A673 (cell line): ENCODE measurements at regions of chr3 and their contacts with region 1.

Region 1: DNA sequence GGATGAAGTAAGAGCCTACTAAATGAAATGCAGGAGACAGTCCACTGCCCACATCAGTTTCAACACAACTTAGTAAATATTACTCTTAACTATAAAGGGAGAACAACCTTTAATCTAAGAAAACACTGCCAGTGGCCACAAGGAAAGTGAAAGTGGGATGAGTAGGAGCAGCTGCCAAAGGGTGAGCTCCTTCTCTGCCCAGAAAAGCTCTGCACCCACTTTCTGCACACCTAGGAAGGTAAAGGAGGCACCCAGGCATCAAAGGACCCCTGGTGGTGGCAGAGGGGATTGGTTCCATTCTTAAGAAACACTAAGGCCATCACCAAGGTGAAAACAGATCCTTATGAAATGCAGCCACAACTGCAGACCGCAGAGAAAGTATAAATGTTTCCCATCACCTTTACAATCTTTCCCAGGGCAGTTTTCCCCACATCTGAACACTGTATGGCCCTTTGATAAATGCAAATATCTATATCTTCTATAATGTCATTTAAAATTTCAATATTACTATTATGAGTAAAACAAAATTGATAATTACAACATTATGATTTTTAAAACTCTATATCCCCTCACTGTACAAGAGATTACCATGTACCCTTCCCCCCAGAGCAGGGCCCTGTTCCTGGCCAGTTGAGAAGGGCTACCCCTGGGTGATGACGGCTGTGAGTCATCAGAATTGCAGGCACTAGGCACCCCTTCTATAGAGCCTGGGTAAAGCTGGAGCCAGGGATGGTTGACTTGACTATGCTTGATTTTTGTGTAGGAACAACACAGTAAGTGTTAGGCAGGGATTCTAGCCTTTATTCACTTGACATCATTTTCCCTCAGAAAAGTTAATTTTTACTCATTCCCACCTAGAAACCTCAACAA is 92.0 kb downstream of the SNRK start:
- DNase-seq: peak; percentile 23
- H3K4me3 ChIP-seq: no peak overlapping the region
- H3K27ac ChIP-seq: no peak overlapping the region
- H3K4me1 ChIP-seq: no peaks in the 10 kb centered on the region
- H3K27me3 ChIP-seq: no peaks in the 10 kb centered on the region
- CTCF ChIP-seq: peak; percentile 54

Region 2: DNA sequence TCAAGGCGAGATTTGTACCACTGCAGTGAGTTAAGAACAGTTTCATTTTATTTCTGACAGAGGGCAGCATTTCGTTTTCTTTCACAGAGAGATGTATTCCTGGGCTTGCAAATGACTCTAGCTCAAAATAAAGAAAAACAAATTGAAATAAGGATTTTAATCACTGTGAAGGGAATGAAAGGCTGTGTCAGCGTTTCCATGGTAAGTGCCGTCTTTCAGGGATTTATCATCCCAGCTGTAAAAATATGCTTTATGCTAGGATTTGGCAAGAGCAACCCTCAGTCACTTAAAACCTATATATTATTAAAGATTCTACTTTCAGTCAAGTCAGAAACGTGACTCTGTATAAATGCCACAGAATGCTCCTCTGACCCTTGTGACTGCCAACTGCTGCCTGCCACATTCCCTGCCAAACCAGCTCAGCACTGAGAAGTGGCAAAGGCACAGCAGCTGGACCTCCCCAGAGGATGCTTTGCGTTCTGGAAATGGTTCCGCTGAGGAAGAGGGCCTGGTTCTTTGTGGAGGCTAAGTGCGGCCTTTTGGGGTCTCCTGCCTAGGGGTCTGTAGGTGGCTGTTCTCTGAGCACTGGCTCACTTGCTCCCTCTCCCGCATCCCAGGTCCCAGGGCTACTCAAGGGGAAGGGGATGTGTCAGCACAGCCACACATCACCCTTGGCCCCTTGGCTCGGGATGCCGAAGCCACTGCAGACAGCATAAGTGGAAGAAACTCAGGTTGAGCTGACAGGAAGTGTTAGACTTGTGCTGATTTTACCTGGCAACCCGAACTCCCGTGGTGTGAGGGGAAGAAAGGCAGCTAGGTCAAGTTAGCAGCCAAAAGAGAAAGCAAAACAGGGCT is 215.8 kb before region 1 on chr3:
- CTCF ChIA-PET with region 1: no interaction called
- POLR2A ChIA-PET with region 1: no interaction called
- intact Hi-C with region 1: loop called (anchors 5 kb)
- DNase-seq: peak; percentile 23
- H3K4me3 ChIP-seq: no peak overlapping the region
- H3K27ac ChIP-seq: no peak overlapping the region
- H3K4me1 ChIP-seq: no peaks in the 10 kb centered on the region
- H3K27me3 ChIP-seq: no peaks in the 10 kb centered on the region
- CTCF ChIP-seq: peak; percentile 44

Region 3: GRCh38 chr3:43223670-43224364 is 154.5 kb before region 1 on chr3:
- CTCF ChIA-PET with region 1: interaction called, 5 read pairs
- POLR2A ChIA-PET with region 1: no interaction called
- intact Hi-C with region 1: loop called (anchors 10 kb)
- DNase-seq: no peak
- H3K4me3 ChIP-seq: no peak overlapping the region
- H3K27ac ChIP-seq: no peak overlapping the region
- H3K4me1 ChIP-seq: no peaks in the 10 kb centered on the region
- H3K27me3 ChIP-seq: no peaks in the 10 kb centered on the region
- CTCF ChIP-seq: peak; percentile 44